Motor neuron (in vitro differentiated cells): ENCODE measurements at regions of chrX and their contacts with region 1.

Region 1: DNA sequence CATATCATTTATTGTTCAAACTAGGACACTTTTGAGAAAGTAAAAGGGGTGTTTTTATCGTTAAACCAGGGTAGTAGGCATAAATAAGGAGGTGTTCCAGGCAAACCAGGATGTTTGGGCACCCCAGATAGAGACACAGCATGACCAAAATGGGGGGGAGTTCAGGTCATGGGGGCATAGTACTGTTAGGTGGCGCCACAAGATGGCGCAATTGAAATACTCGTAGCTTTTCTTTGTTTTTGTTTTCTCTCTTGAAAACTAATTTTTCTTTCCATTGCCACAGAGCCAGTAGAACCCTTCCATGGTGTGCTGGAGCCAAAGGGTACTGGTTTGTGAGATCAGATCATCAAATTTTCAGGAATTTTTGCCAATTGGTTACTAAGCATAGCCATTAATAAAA is 283.4 kb downstream of the BCOR start:
- ATAC-seq: peak in 2 of 8 experiments; percentile 18 to 35
- H3K4me3 ChIP-seq: no peak overlapping the region
- H3K27ac ChIP-seq: no peak overlapping the region
- H3K4me1 ChIP-seq: peaks cover 32 to 35% of the 10 kb centered on the region in 2 donors

Region 2: DNA sequence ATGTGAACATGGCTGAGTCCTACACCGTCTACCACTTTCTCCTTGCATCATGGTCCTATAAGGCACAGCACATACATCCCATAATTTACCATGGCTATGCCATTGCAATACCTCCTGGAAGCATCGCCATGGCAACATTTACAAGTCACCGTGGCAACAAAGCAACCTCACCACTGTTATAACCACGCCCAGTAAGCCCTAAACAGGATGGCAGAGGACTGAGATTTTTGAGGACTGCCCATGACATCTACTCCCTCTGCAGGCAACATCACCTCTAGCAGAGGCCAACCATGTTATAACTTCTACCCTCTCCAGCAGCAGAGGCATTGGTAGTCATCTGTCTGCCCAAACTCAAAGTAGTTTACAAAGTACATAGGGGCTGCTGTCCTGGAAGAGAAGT is 253.7 kb after region 1 on chrX:
- in situ Hi-C with region 1: loop called in 1 of 9 experiments (anchors 25 kb)
- ATAC-seq: peak in 6 of 8 experiments; percentile 20 to 68 (median 34)
- H3K4me3 ChIP-seq: no peak overlapping the region
- H3K27ac ChIP-seq: no peak overlapping the region
- H3K4me1 ChIP-seq: peaks cover 0 to 2% of the 10 kb centered on the region in 2 donors